Activated T-helper 2 cell treated with anti-CD3 and anti-CD28 coated beads, Interferon-gamma antibody, Interleukin-2, Interleukin-4, amounts not matched to agents 10 μg/mL and 5 μg/mL and 100 μg/mL, durations not matched to agents 14 hours and 24 hours and 36 hours (primary cell): ENCODE measurements at regions of chr9 and their contacts with region 1.

Region 1: GRCh38 chr9:68653141-68653595 is 51.9 kb upstream of the PIP5K1B start:
- DNase-seq: peak; percentile 22
- H3K4me3 Mint-ChIP-seq: peak overlapping the region; percentile 18
- H3K27ac Mint-ChIP-seq: peak overlapping the region; percentile 95
- H3K4me1 Mint-ChIP-seq: peaks cover 64% of the 10 kb centered on the region
- H3K27me3 Mint-ChIP-seq: no peaks in the 10 kb centered on the region

Region 2: GRCh38 chr9:68584189-68585033 is 68.8 kb before region 1 on chr9:
- intact Hi-C with region 1: loop called (anchors 1 kb)
- DNase-seq: peak; percentile 71
- H3K4me3 Mint-ChIP-seq: no peak overlapping the region
- H3K27ac Mint-ChIP-seq: peak overlapping the region; percentile 44
- H3K4me1 Mint-ChIP-seq: peaks cover 14% of the 10 kb centered on the region
- H3K27me3 Mint-ChIP-seq: no peaks in the 10 kb centered on the region

Region 3: DNA sequence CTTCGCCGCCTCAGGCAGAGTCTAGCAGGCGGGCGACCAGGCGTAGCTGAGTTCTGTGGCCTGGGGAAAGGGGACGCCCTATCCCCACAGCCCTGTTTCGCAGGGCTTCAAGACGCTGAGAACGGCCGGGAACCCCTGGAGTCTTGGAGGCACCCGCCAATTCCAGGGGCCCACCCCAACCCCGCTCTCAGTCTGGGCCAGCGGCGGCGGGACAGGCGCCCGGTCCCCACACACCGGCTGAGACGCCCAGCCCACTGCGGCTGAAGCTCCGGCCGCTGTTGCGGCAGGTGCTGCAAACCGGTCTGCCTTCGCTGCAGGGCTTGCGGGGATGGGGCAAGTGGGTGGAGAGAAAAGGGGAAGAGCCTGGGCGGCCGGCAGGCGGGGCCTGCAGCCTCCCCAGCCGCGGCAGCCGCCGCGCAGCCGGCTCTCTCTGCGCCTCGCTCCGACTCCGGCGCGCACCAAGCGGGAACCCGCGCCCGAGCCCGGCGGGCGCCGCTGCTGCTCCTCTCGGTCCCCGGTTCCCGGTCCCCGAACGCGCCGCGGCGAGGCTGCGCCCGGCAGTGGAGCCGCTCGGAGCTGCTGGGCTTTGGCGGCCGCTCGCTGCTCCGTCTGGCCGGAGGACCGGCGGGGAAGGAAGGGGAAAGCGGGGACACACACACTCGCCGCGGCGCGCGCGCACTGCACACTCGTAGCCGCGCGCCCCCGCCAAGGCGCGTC is 51.8 kb after region 1 on chr9 and contains the start of gene PIP5K1B:
- intact Hi-C with region 1: loop called (anchors 1 kb)
- DNase-seq: peak; percentile 69
- H3K4me3 Mint-ChIP-seq: peak within 1 kb of the TSS; percentile 88
- H3K27ac Mint-ChIP-seq: peak within 1 kb of the TSS; percentile 67
- H3K4me1 Mint-ChIP-seq: peaks cover 54% of the 10 kb centered on the region
- H3K27me3 Mint-ChIP-seq: peaks cover 36% of the 10 kb centered on the region
- total RNA-seq, gene PIP5K1B: 76.2 and 77.2 TPM in 2 replicates

Region 4: GRCh38 chr9:68779558-68780384 is 126.6 kb after region 1 on chr9:
- intact Hi-C with region 1: loop called (anchors 1 kb)
- DNase-seq: peak; percentile 91
- H3K4me3 Mint-ChIP-seq: no peak overlapping the region
- H3K27ac Mint-ChIP-seq: no peak overlapping the region
- H3K4me1 Mint-ChIP-seq: peaks cover 17% of the 10 kb centered on the region
- H3K27me3 Mint-ChIP-seq: no peaks in the 10 kb centered on the region

Region 5: DNA sequence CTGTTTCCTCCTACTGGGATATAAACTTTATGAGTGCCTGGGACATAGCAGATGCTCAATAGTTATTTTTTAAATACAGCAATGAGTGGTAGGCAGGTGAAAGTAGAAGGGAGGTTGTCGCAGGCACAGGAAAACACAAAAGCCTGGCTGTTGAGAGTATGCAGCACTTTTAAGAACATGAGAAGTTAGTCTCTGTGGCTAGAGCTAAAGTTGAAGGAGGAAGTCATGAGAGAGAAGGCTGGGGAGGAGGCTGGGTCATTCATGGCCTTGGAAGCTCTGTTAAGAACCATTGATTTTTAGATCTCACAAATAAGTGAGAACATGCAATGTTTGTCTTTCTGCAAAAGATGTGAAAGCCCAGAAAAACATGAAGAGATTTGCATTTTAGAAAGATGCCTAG is 234.1 kb after region 1 on chr9:
- intact Hi-C with region 1: loop called (anchors 1 kb)
- DNase-seq: no peak
- H3K4me3 Mint-ChIP-seq: peak overlapping the region; percentile 17
- H3K27ac Mint-ChIP-seq: peak overlapping the region; percentile 62
- H3K4me1 Mint-ChIP-seq: peaks cover 35% of the 10 kb centered on the region
- H3K27me3 Mint-ChIP-seq: no peaks in the 10 kb centered on the region

Region 6: DNA sequence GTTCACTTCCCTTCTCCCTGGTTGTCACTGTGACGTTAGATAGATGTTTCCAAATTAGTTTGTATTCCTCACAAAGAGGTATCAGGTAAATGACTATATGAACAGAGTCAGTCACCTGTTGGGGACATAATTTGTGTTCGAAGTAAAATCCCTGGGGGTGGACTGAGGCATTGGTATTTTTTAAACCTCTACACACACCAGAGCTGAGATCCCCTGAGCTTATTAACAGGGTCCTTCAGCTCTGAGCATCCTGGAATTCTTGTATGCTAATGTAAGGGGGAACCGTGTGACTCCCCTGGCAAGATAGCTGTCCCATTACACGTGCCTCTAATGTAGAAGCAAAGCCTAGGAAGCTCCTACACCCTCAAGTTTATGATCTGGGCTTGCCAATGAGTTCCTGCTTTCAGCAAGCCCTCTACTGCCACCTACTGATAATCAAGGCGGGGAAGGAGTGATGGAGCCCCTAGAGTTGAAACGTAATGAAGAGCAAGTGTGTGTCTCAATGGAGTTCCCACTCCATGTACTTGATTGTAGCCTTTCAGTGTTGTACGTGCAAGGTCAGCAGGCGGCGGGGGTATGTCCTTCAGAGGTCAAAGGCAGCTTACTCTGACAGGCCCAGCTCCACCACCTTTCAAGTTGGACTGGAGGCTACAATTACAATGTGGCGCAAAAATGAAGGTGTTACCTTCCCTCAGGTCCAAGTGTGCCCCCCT is 346.4 kb after region 1 on chr9:
- intact Hi-C with region 1: loop called (anchors 5 kb)
- DNase-seq: peak; percentile 65
- H3K4me3 Mint-ChIP-seq: no peak overlapping the region
- H3K27ac Mint-ChIP-seq: peak overlapping the region; percentile 64
- H3K4me1 Mint-ChIP-seq: peaks cover 42% of the 10 kb centered on the region
- H3K27me3 Mint-ChIP-seq: no peaks in the 10 kb centered on the region

Region 7: DNA sequence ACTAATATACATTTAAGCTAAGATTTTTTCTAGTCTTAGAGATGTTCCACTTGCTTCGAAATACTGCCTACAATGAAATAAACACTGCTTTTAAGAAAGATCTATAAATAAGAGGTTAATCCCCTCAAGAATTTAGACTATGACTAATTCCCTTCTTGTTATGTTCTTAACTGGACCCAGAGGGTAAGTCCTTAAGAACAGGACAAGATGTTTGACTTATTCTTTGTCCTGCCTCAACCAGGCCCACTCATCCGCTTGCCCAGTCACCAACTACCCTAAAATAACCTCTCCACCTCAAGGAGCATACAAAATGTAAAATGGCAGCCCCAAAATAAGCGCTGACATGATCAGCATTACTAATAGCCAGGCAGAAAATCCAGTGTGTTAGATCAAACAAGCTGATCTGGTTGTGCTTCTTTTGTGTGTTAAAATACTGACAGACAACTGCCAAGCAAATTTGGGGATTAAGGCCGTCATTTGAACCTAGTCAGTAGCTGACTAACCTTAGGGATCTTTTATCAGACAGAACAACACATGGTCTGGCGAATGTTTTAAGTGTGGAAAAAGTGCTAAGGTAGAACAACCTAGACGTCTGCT is 1511.9 kb after region 1 on chr9:
- intact Hi-C with region 1: no loop called
- DNase-seq: no peak
- H3K4me3 Mint-ChIP-seq: no peak overlapping the region
- H3K27ac Mint-ChIP-seq: no peak overlapping the region
- H3K4me1 Mint-ChIP-seq: no peaks in the 10 kb centered on the region
- H3K27me3 Mint-ChIP-seq: no peaks in the 10 kb centered on the region

Region 8: GRCh38 chr9:70413798-70414775 is 1760.9 kb after region 1 on chr9 and contains the start of gene KLF9:
- intact Hi-C with region 1: loop called (anchors 10 kb)
- DNase-seq: peak; percentile 92
- H3K4me3 Mint-ChIP-seq: peak within 1 kb of the TSS; percentile 95
- H3K27ac Mint-ChIP-seq: peak within 1 kb of the TSS; percentile 100
- H3K4me1 Mint-ChIP-seq: peaks cover 41% of the 10 kb centered on the region
- H3K27me3 Mint-ChIP-seq: no peaks in the 10 kb centered on the region
- total RNA-seq, gene KLF9: 13.5 and 13.7 TPM in 2 replicates